Gastrocnemius medialis (tissue), 4 donors: ENCODE measurements at regions of chr4 and their contacts with region 1.

Region 1: GRCh38 chr4:71184195-71184781 is 154.5 kb upstream of the SLC4A4 start:
- DNase-seq: peak in 1 of 2 donors; percentile 17
- ATAC-seq: peak; percentile 21 to 40
- H3K4me3 ChIP-seq: no peak overlapping the region
- H3K27ac ChIP-seq: no peak overlapping the region
- H3K4me1 ChIP-seq: peaks cover 8 to 10% of the 10 kb centered on the region in 2 donors
- H3K27me3 ChIP-seq: no peaks in the 10 kb centered on the region
- CTCF ChIP-seq: peak; percentile 22 to 65 (median 23)
- POLR2A ChIP-seq: no peak

Region 2: GRCh38 chr4:71074452-71075299 is 109.6 kb before region 1 on chr4:
- in situ Hi-C with region 1: no loop called
- intact Hi-C with region 1: loop called (anchors 10 kb)
- DNase-seq: peak in 1 of 2 donors; percentile 14
- ATAC-seq: peak; percentile 92 to 93
- H3K4me3 ChIP-seq: peak overlapping the region; percentile 36 to 45 (median 42)
- H3K27ac ChIP-seq: peak overlapping the region; percentile 78 to 83 (median 81)
- H3K4me1 ChIP-seq: peaks cover 9 to 10% of the 10 kb centered on the region in 2 donors
- H3K27me3 ChIP-seq: no peaks in the 10 kb centered on the region
- CTCF ChIP-seq: no peak
- POLR2A ChIP-seq: no peak

Region 3: DNA sequence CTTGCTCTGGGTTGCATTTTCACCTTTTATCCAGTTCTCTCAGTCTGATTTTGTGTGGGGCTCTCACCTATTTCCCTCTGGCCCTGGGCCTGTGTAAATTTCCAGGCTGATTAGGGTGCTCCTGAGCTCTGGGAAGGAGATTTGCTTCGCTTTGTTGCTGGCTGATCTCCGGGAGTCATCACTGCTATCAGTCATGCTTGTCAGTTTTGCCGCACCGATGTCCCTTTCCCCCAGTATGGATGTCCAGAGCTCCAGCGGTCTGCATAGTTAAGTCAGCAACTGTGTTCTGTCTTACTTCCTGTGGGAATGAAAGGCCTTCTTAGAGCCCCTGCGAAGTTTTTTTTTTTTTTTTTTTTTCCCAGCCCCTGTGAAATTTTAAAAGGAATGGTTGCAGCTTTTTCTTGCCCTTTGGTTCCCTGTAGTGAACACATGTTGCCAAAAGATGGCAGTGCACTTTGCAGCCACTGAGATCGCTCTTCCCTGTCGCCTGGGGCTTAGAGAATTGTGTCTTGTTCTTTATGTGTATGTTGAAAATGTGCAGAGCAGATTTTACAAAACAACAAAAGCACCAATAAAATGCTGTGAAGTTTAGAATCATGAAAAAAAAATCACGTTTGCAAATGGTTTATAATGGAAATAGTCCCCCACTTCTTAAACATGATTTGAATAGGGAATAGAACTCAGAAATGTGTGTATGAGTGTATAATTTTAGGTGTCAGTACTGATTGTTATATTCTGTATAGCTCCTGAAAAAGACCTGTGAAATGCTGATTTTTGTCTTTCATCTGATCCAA is 45.4 kb after region 1 on chr4:
- in situ Hi-C with region 1: no loop called
- intact Hi-C with region 1: loop called (anchors 2 kb)
- DNase-seq: no peak
- ATAC-seq: peak; percentile 48 to 76
- H3K4me3 ChIP-seq: peak overlapping the region in 1 of 4 donors; percentile 28
- H3K27ac ChIP-seq: peak overlapping the region in 2 of 4 donors; percentile 72 to 76
- H3K4me1 ChIP-seq: peaks cover 21 to 29% of the 10 kb centered on the region in 2 donors
- H3K27me3 ChIP-seq: no peaks in the 10 kb centered on the region
- CTCF ChIP-seq: peak; percentile 44 to 76 (median 56)
- POLR2A ChIP-seq: no peak